Activated B cell treated with CpG ODN at 0.5 μM for 24 hours (primary cell): ENCODE measurements at regions of chr2 and their contacts with region 1.

Region 1: DNA sequence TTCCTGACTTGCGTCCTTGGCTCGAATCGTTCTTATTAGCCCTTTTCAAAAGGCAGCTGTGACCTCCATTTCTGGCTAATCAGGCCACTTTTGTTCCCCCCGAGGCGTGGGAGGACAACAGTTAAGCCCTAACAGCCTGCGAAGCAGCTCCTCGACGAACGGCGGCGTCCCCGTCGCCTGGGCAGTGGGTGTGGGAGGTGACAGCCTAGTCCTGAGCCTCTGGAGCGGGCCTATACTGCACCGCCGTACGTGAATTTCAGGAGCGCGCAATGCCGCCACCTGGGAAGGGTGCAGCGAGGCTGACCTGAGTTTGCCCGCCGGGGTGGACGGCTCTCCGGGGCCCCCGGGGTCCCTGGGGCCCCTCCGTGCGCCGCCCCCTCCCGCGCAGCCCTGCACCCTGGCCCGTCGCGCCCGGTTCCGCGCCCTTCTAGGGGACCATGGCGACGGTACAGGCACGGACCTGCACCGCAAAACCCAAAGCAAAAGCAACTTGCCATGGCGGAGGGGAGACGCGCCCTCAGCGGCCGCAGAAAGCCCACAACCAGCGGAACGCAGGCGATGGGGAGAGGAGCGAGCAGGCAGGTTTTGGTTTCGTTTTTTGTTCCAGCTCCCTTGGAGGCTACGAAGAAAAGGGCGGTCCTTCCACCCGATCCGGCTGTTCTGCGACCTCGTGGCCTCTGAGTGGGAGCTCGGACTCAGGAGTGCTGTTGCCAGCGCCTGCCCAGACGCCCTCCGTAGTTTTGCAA is at the start of gene RBM43:
- DNase-seq: peak; percentile 58
- ATAC-seq: peak; percentile 90
- H3K4me3 Mint-ChIP-seq: peak within 1 kb of the TSS; percentile 93
- H3K27ac Mint-ChIP-seq: peak within 1 kb of the TSS; percentile 94
- H3K4me1 Mint-ChIP-seq: peaks cover 20% of the 10 kb centered on the region
- H3K27me3 Mint-ChIP-seq: no peaks in the 10 kb centered on the region
- CTCF ChIP-seq: no peak
- total RNA-seq, gene RBM43: 4.8 and 5.0 TPM in 2 replicates

Region 2: DNA sequence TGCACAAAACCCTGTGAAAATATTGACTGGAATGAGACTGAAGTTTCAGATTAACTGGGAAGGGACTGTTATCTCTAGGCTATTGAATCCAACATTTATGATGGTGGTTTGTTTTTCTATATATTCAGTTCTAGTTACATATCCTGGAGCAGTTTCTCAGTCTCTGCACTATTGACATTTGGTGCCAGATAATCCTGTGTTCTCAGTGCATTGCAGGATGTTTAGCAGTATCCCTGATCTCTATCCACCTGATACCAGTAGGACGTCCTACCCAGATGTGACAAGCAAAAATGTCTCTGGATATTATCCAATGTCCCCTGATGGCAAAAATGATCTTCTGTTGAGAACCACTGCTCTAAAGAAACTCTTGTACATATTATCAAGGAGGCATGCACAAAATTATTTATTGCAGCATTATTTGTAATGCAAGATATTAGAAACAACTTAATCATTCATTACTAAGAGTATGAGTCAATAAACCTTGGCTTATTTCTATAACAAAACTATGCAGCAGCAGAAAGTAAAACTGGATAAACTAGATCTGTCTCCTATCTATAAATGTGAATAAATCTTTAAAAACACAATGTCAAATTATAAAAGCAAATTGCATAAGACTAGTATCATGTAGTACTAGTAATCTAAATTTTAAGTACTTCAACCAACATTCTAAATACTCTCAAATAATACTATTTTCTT is 404.7 kb before region 1 on chr2:
- CTCF ChIA-PET with region 1: no interaction called
- POLR2A ChIA-PET with region 1: no interaction called
- intact Hi-C with region 1: no loop called
- DNase-seq: no peak
- ATAC-seq: no peak
- H3K4me3 Mint-ChIP-seq: no peak overlapping the region
- H3K27ac Mint-ChIP-seq: no peak overlapping the region
- H3K4me1 Mint-ChIP-seq: no peaks in the 10 kb centered on the region
- H3K27me3 Mint-ChIP-seq: no peaks in the 10 kb centered on the region
- CTCF ChIP-seq: no peak

Region 3: DNA sequence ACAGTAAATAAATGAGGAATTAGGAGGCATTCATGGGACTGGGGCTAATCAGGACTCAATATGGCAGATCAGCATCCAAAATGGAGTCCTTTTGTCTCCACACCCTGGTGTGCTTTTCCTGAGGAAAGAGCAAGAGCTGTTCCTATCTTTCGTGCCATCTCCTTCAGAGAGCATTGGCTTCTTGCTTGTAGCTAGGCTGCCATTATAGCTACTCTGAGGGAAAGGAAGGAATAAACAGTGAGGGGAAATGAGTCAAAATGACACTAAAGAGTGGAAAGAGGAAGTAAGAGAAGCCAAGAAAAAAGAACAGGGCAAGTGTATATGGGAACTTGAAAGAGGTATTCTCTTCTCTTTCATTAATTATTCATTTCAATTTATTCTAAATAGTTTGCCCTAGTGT is 36.5 kb after region 1 on chr2:
- CTCF ChIA-PET with region 1: interaction called, 3 read pairs
- POLR2A ChIA-PET with region 1: interaction called, 8 read pairs
- intact Hi-C with region 1: loop called (anchors 2 kb)
- DNase-seq: no peak
- ATAC-seq: peak; percentile 88
- H3K4me3 Mint-ChIP-seq: no peak overlapping the region
- H3K27ac Mint-ChIP-seq: peak overlapping the region; percentile 83
- H3K4me1 Mint-ChIP-seq: peaks cover 14% of the 10 kb centered on the region
- H3K27me3 Mint-ChIP-seq: no peaks in the 10 kb centered on the region
- CTCF ChIP-seq: no peak

Region 4: DNA sequence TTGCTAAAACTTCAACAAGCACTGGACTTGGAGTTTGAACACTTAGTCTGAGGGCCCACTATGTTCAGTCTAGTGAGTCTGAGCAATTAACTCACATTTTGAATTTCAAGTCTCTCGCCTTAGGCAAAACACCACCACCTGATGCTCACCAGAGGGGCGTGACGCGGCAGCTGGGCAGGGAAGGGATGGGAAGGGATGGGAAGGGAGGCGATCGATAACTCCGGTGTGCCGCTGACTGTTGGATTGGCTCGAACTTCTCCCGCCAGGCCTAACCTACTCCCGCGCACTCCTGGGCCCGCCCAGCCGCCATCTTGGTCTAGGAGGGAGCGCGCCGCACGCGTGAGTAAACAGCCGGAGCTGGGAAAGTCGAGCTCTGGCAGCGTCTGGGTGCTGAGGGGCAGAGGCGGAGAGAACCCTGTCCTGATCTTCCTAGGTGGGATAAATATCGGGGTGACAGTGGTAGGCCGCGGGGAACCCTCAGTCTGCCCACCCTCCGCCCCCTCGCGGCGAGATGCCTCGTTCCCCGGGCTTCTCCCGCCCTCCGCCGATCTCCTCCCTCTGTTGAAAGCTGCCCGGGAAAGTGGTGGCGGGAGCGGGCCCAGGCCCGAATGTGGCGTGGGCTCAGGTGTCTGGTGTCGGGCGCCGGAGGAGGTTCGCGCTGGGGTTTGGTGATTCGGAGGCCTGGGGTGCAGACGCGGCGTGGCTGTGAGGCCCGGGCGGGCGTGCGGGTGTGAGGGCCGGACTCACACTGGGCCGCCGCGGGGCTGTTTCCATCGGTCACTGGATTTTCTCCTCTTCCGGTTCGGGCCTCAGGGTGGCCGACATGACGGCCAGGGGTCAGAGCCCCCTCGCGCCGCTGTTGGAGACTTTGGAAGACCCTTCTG is 148.4 kb after region 1 on chr2 and contains the start of gene RIF1:
- CTCF ChIA-PET with region 1: interaction called, 3 read pairs
- POLR2A ChIA-PET with region 1: interaction called, 19 read pairs
- intact Hi-C with region 1: loop called (anchors 1 kb)
- DNase-seq: peak; percentile 73
- ATAC-seq: peak; percentile 90
- H3K4me3 Mint-ChIP-seq: peak within 1 kb of the TSS; percentile 89
- H3K27ac Mint-ChIP-seq: peak within 1 kb of the TSS; percentile 80
- H3K4me1 Mint-ChIP-seq: peaks cover 26% of the 10 kb centered on the region
- H3K27me3 Mint-ChIP-seq: no peaks in the 10 kb centered on the region
- CTCF ChIP-seq: no peak
- total RNA-seq, gene RIF1: 43.7 and 51.1 TPM in 2 replicates

Region 5: GRCh38 chr2:152717228-152718075 is 1456.0 kb after region 1 on chr2 and contains the start of gene PRPF40A:
- CTCF ChIA-PET with region 1: no interaction called
- POLR2A ChIA-PET with region 1: no interaction called
- intact Hi-C with region 1: loop called (anchors 5 kb)
- DNase-seq: peak; percentile 97
- ATAC-seq: peak; percentile 76
- H3K4me3 Mint-ChIP-seq: peak within 1 kb of the TSS; percentile 100
- H3K27ac Mint-ChIP-seq: peak within 1 kb of the TSS; percentile 98
- H3K4me1 Mint-ChIP-seq: peaks cover 51% of the 10 kb centered on the region
- H3K27me3 Mint-ChIP-seq: no peaks in the 10 kb centered on the region
- CTCF ChIP-seq: no peak
- total RNA-seq, gene PRPF40A: 126 and 129 TPM in 2 replicates